ENCODE measurements at regions of chr7 and their contacts with region 1.

Region 1: GRCh38 chr7:33757562-33758165 is 147.7 kb upstream of the BMPER start:
- DNase-seq: peak in 1 of 2 donors; percentile 31
- ATAC-seq: peak in 2 of 8 donors; percentile 18 to 38
- H3K4me3 ChIP-seq: no peak overlapping the region
- H3K27ac ChIP-seq: no peak overlapping the region
- H3K4me1 ChIP-seq: peaks cover 0 to 12% (median 10%) of the 10 kb centered on the region in 9 donors
- H3K27me3 ChIP-seq: no peaks in the 10 kb centered on the region
- CTCF ChIP-seq: peak; percentile 64 to 82 (median 70)

Region 2: GRCh38 chr7:33243319-33243881 is 514.3 kb before region 1 on chr7:
- intact Hi-C with region 1: loop called in 1 of 10 experiments (anchors 10 kb)
- DNase-seq: peak in 1 of 2 donors; percentile 5
- ATAC-seq: peak in 5 of 8 donors; percentile 38 to 70 (median 56)
- H3K4me3 ChIP-seq: no peak overlapping the region
- H3K27ac ChIP-seq: no peak overlapping the region
- H3K4me1 ChIP-seq: no peaks in the 10 kb centered on the region
- H3K27me3 ChIP-seq: no peaks in the 10 kb centered on the region
- CTCF ChIP-seq: peak; percentile 25 to 79 (median 66)

Region 3: GRCh38 chr7:33477719-33478480 is 279.8 kb before region 1 on chr7:
- intact Hi-C with region 1: no loop called
- DNase-seq: no peak
- ATAC-seq: no peak
- H3K4me3 ChIP-seq: no peak overlapping the region
- H3K27ac ChIP-seq: no peak overlapping the region
- H3K4me1 ChIP-seq: no peaks in the 10 kb centered on the region
- H3K27me3 ChIP-seq: no peaks in the 10 kb centered on the region
- CTCF ChIP-seq: no peak

Region 4: DNA sequence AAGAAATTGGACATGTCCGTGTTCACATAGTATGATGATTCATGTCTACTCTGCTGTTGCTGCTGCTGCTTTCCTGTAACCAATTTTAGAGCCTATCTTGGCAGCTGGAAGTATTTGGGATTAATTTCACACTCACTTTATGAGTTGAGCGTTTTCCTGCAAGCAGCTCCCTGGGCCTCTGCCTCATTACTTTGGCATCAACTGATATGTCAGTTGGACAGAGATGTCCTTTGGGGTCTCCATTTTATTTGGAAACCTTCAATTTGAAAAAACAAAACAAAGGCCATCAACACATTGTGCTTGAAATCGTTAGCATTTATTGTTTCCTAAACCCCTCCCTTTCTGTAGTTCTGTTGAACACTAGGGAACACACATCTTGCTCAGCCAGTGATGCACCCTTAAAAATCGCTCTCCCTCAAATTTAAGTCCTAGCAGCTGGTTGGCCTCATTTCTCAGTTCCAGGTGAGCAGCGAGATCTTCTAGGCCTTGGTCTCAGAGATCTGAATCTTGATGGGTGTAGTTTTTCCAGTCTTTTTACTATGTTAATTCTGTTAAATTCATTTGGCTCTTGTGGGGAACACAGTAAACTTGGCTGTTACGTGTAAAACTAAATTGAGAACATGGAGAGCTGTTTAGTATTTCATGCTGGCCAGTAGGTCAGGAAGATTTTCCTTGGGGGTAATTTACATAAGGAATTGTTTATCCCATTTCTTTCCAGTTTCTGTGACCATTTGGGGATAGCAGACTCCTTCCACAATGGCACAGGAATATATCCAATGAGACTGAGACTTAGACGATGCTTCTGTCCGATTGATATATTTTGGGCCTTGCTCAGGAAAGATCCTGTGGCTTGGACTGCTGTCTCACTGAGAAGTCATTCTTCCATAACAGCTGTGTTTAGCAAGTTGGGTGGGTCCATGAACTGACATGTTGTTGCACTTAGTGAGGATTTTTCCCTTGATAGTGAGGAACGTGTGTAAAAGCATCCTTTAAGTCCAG is 256.7 kb before region 1 on chr7:
- intact Hi-C with region 1: no loop called
- DNase-seq: no peak
- ATAC-seq: peak in 6 of 8 donors; percentile 33 to 66 (median 47)
- H3K4me3 ChIP-seq: no peak overlapping the region
- H3K27ac ChIP-seq: peak overlapping the region in 2 of 10 donors; percentile 22 to 49
- H3K4me1 ChIP-seq: peaks cover 0 to 12% (median 4%) of the 10 kb centered on the region in 9 donors
- H3K27me3 ChIP-seq: no peaks in the 10 kb centered on the region
- CTCF ChIP-seq: no peak

Region 5: GRCh38 chr7:33639552-33640197 is 118.0 kb before region 1 on chr7:
- intact Hi-C with region 1: no loop called
- DNase-seq: no peak
- ATAC-seq: peak in 4 of 8 donors; percentile 33 to 72 (median 40)
- H3K4me3 ChIP-seq: no peak overlapping the region
- H3K27ac ChIP-seq: no peak overlapping the region
- H3K4me1 ChIP-seq: peaks cover 0 to 4% (median 0%) of the 10 kb centered on the region in 9 donors
- H3K27me3 ChIP-seq: no peaks in the 10 kb centered on the region
- CTCF ChIP-seq: no peak

Region 6: GRCh38 chr7:33921216-33921938 is 163.7 kb after region 1 on chr7:
- intact Hi-C with region 1: loop called in 1 of 10 experiments (anchors 10 kb)
- DNase-seq: peak; percentile 37 to 55
- ATAC-seq: peak; percentile 39 to 82 (median 70)
- H3K4me3 ChIP-seq: no peak overlapping the region
- H3K27ac ChIP-seq: peak overlapping the region in 1 of 10 donors; percentile 51
- H3K4me1 ChIP-seq: peaks cover 0 to 8% (median 5%) of the 10 kb centered on the region in 9 donors
- H3K27me3 ChIP-seq: peaks cover 0 to 23% (median 0%) of the 10 kb centered on the region in 7 donors
- CTCF ChIP-seq: no peak

Measured in heart right ventricle (tissue), 16 donors.